Transverse colon (tissue), 4 donors: ENCODE measurements at regions of chr1 and their contacts with region 1.

Region 1: GRCh38 chr1:234309598-234310459 is 63.4 kb upstream of the COA6 start:
- DNase-seq: peak; percentile 69
- H3K4me3 ChIP-seq: peak overlapping the region in 1 of 4 donors; percentile 9
- H3K27ac ChIP-seq: no peak overlapping the region
- H3K4me1 ChIP-seq: peaks cover 0 to 6% (median 0%) of the 10 kb centered on the region in 4 donors
- H3K27me3 ChIP-seq: no peaks in the 10 kb centered on the region
- CTCF ChIP-seq: peak; percentile 73 to 89 (median 80)
- EP300 ChIP-seq: no peak
- POLR2A ChIP-seq: no peak

Region 2: DNA sequence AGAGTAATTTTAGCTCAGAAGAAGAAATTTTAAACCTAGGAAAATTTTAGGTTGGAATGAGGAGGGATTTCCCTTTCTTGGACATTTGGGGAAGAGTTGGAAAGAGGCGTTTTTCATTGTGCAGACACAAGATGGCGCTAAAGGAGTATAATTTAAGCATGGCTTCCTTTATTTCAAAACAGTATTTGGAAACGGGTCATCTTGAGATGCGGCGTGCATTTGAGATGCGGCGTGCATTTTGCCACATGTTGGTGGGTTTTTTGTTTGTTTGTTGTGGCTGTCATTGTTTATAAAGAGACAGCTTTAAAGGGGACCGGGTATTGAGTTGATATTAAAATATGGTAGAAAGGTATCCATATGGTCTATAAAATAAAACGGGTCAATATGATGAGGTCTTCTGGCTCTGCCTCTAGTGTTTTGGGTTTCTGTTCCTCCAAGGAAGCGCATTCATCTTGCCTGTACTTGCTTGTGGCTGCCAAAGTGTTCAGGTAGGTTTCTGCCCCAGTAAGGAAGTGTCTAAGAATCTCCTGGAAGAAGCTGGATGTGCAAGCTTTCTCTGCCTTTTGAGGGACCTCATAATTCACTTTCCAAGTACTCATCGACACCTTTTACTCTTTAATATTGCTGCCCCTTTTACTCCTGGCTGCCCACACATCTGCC is 195.1 kb before region 1 on chr1:
- in situ Hi-C with region 1: loop called in 1 of 4 experiments (anchors 25 kb)
- intact Hi-C with region 1: loop called (anchors 10 kb)
- DNase-seq: peak; percentile 10
- H3K4me3 ChIP-seq: no peak overlapping the region
- H3K27ac ChIP-seq: no peak overlapping the region
- H3K4me1 ChIP-seq: no peaks in the 10 kb centered on the region
- H3K27me3 ChIP-seq: peaks cover 19% of the 10 kb centered on the region
- CTCF ChIP-seq: peak; percentile 45 to 64 (median 56)
- EP300 ChIP-seq: no peak
- POLR2A ChIP-seq: no peak

Region 3: GRCh38 chr1:234125283-234125682 is 184.5 kb before region 1 on chr1:
- in situ Hi-C with region 1: loop called in 2 of 4 experiments (anchors 25 kb)
- intact Hi-C with region 1: no loop called
- DNase-seq: peak; percentile 10
- H3K4me3 ChIP-seq: no peak overlapping the region
- H3K27ac ChIP-seq: no peak overlapping the region
- H3K4me1 ChIP-seq: no peaks in the 10 kb centered on the region
- H3K27me3 ChIP-seq: peaks cover 31% of the 10 kb centered on the region
- CTCF ChIP-seq: no peak
- EP300 ChIP-seq: no peak
- POLR2A ChIP-seq: no peak

Region 4: GRCh38 chr1:234573711-234574299 is 264.0 kb after region 1 on chr1:
- in situ Hi-C with region 1: no loop called
- intact Hi-C with region 1: no loop called
- DNase-seq: no peak
- H3K4me3 ChIP-seq: no peak overlapping the region
- H3K27ac ChIP-seq: no peak overlapping the region
- H3K4me1 ChIP-seq: peaks cover 0 to 3% (median 0%) of the 10 kb centered on the region in 4 donors
- H3K27me3 ChIP-seq: no peaks in the 10 kb centered on the region
- CTCF ChIP-seq: no peak
- EP300 ChIP-seq: no peak
- POLR2A ChIP-seq: no peak